ENCODE measurements at regions of chr11 and their contacts with region 1.

Region 1: GRCh38 chr11:36258730-36259360 is 30.4 kb downstream of the COMMD9 start:
- DNase-seq: peak; percentile 93
- H3K4me3 ChIP-seq: no peak overlapping the region
- H3K27ac ChIP-seq: no peak overlapping the region
- H3K4me1 ChIP-seq: no peaks in the 10 kb centered on the region
- H3K27me3 ChIP-seq: peaks cover 20% of the 10 kb centered on the region
- CTCF ChIP-seq: peak; percentile 99

Region 2: GRCh38 chr11:35780951-35781860 is 477.6 kb before region 1 on chr11:
- CTCF ChIA-PET with region 1: no interaction called
- POLR2A ChIA-PET with region 1: no interaction called
- intact Hi-C with region 1: no loop called
- DNase-seq: no peak
- H3K4me3 ChIP-seq: no peak overlapping the region
- H3K27ac ChIP-seq: no peak overlapping the region
- H3K4me1 ChIP-seq: peaks cover 8% of the 10 kb centered on the region
- H3K27me3 ChIP-seq: no peaks in the 10 kb centered on the region
- CTCF ChIP-seq: no peak

Region 3: DNA sequence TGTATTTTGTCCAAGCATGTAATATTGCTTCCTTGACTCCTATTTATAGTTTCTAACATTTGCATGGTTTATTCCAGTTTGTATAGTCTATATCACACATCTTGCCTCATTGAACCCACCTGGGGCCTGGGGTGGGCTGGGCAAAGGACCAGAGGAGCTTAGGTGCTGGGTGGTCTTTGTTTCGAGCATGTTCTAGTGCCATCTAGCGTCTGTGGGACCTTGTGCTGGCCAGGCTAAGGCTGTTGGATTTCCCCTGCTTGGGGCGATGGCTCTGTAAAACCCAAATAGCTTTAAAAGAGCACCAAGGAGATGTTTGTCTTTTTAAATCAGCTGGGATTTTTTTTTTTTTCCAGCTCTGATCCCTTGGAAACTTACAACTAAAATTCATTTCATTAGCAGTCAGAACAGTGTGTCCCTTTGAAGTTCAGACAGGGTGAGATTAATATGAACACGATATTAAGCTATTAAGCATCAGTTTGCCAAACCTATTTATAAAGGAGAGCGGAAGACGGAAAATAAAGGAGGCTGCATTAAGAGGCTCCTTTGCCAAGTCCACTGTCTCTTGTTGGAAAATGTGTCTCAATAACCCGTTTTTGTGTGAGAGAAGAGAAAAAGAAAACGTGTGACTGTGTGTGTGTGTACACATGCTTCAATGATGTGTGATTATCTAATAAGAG is 127.0 kb before region 1 on chr11:
- CTCF ChIA-PET with region 1: interaction called, 16 read pairs
- POLR2A ChIA-PET with region 1: no interaction called
- intact Hi-C with region 1: loop called (anchors 5 kb)
- DNase-seq: peak; percentile 77
- H3K4me3 ChIP-seq: no peak overlapping the region
- H3K27ac ChIP-seq: no peak overlapping the region
- H3K4me1 ChIP-seq: peaks cover 1% of the 10 kb centered on the region
- H3K27me3 ChIP-seq: no peaks in the 10 kb centered on the region
- CTCF ChIP-seq: peak; percentile 99

Measured in A673 (cell line).